Heart left ventricle (tissue), 16 donors: ENCODE measurements at regions of chr17 and their contacts with region 1.

Region 1: DNA sequence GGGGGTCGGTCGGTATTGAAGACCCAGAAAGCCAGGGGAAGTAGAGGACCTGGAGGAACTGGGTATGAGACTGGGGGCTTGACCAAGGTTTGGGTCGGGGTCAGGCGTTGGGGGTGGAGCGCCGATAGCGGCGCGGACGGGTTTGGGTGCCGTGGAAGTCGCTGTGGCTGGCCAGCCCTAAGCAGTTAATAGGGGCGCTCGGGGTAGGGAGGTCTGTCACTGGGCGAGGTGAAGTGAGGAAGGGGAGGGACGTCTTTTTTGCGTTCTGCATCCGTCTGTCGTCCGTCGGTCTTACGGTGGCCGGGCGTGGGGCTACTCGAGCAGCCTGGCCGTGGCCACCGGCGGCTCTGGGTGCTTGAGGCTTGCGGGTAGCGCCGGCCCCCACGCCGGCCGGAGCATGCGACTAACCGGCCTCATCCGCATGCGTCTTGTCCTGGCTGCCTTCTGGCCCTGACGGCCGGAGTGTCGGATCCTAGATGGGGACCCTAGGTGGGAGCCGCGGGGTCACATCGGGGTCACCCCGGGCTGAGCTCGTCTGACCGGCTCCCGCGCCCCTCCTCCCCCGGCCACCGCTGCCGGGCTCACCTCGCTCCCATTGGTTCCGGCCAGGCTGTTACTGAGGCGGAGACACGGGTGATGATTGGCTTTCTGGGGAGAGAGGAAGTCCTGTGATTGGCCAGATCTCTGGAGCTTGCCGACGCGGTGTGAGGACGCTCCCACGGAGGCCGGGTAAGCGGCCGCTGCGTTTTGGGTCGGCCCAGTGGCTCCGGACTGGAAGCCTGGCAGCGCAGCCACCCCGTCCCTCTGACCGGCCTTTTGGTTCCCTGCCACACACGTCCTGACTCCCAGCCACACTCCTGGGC is 10.3 kb upstream of the TMEM88 start:
- DNase-seq: peak; percentile 93 to 95 (median 94)
- ATAC-seq: peak; percentile 64 to 84 (median 73)
- H3K4me3 ChIP-seq: peak overlapping the region; percentile 48 to 90 (median 80)
- H3K27ac ChIP-seq: peak overlapping the region; percentile 66 to 99 (median 95)
- H3K4me1 ChIP-seq: peaks cover 11 to 51% (median 35%) of the 10 kb centered on the region in 12 donors
- H3K27me3 ChIP-seq: no peaks in the 10 kb centered on the region
- CTCF ChIP-seq: no peak
- POLR2A ChIP-seq: peak; percentile 64 to 70

Region 2: GRCh38 chr17:7239091-7240027 is 605.2 kb before region 1 on chr17 and contains the start of gene PHF23:
- intact Hi-C with region 1: loop called in 2 of 10 experiments (anchors 10 kb)
- DNase-seq: peak; percentile 99 to 100 (median 99)
- ATAC-seq: peak; percentile 79 to 86 (median 84)
- H3K4me3 ChIP-seq: peak within 1 kb of the TSS; percentile 66 to 98 (median 90)
- H3K27ac ChIP-seq: peak within 1 kb of the TSS; percentile 81 to 98 (median 94)
- H3K4me1 ChIP-seq: peaks cover 5 to 58% (median 40%) of the 10 kb centered on the region in 12 donors
- H3K27me3 ChIP-seq: no peaks in the 10 kb centered on the region
- CTCF ChIP-seq: peak in 1 of 12 donors; percentile 9
- POLR2A ChIP-seq: peak in 1 of 2 donors; percentile 56
- total RNA-seq, gene PHF23: 19.1 to 36.7 (median 23.0) TPM

Region 3: GRCh38 chr17:7444682-7445618 is 399.6 kb before region 1 on chr17 and contains the start of gene CHRNB1:
- intact Hi-C with region 1: loop called in 1 of 10 experiments (anchors 10 kb)
- DNase-seq: peak; percentile 82 to 90 (median 86)
- ATAC-seq: peak; percentile 80 to 92 (median 90)
- H3K4me3 ChIP-seq: peak within 1 kb of the TSS; percentile 40 to 64 (median 54)
- H3K27ac ChIP-seq: peak within 1 kb of the TSS in 10 of 12 donors; percentile 27 to 77 (median 65)
- H3K4me1 ChIP-seq: peaks cover 0 to 35% (median 17%) of the 10 kb centered on the region in 12 donors
- H3K27me3 ChIP-seq: peaks cover 0 to 48% (median 6%) of the 10 kb centered on the region in 9 donors
- CTCF ChIP-seq: peak in 3 of 12 donors; percentile 13 to 18 (median 16)
- POLR2A ChIP-seq: no peak
- total RNA-seq, gene CHRNB1: 8.2 to 14.2 (median 11.0) TPM

Region 4: GRCh38 chr17:8138672-8139371 is 294.3 kb after region 1 on chr17:
- intact Hi-C with region 1: loop called in 2 of 10 experiments (anchors 5 to 10 kb)
- DNase-seq: peak; percentile 94 to 97 (median 94)
- ATAC-seq: peak; percentile 90 to 93 (median 91)
- H3K4me3 ChIP-seq: peak overlapping the region in 8 of 12 donors; percentile 2 to 48 (median 33)
- H3K27ac ChIP-seq: peak overlapping the region; percentile 31 to 89 (median 81)
- H3K4me1 ChIP-seq: peaks cover 0 to 45% (median 15%) of the 10 kb centered on the region in 12 donors
- H3K27me3 ChIP-seq: no peaks in the 10 kb centered on the region
- CTCF ChIP-seq: peak; percentile 82 to 95 (median 90)
- POLR2A ChIP-seq: peak in 1 of 2 donors; percentile 75

Region 5: DNA sequence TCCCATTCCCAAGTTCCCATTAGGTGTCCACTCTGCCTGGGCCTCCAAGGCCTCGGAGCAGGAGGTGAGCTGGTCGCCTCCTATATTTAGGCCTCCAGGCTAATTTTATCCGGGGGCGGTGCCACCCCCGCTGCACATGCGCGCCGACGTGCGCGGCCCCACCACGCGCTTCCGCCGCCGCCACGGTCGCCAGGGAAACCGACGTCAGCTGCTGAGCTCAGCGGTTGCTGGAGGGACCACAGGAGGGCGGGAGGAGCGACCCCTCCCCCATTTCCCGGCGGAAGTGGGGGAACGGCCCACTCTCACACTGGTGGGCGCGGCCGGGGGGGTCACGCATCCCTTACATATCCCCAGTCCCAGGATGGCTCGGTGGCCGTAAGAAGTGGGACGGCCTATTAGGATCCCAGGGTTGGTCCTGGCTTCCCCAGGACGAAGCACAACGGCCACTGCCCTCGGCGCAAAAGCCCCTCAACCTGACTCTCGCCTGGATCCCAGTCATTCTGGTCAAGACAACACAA is 306.7 kb after region 1 on chr17:
- intact Hi-C with region 1: loop called in 3 of 10 experiments (anchors 5 to 10 kb)
- DNase-seq: peak; percentile 94 to 97 (median 96)
- ATAC-seq: peak; percentile 16 to 53 (median 44)
- H3K4me3 ChIP-seq: peak overlapping the region; percentile 51 to 97 (median 82)
- H3K27ac ChIP-seq: peak overlapping the region; percentile 98 to 100 (median 100)
- H3K4me1 ChIP-seq: peaks cover 21 to 65% (median 47%) of the 10 kb centered on the region in 12 donors
- H3K27me3 ChIP-seq: no peaks in the 10 kb centered on the region
- CTCF ChIP-seq: no peak
- POLR2A ChIP-seq: peak; percentile 65 to 67

Region 6: DNA sequence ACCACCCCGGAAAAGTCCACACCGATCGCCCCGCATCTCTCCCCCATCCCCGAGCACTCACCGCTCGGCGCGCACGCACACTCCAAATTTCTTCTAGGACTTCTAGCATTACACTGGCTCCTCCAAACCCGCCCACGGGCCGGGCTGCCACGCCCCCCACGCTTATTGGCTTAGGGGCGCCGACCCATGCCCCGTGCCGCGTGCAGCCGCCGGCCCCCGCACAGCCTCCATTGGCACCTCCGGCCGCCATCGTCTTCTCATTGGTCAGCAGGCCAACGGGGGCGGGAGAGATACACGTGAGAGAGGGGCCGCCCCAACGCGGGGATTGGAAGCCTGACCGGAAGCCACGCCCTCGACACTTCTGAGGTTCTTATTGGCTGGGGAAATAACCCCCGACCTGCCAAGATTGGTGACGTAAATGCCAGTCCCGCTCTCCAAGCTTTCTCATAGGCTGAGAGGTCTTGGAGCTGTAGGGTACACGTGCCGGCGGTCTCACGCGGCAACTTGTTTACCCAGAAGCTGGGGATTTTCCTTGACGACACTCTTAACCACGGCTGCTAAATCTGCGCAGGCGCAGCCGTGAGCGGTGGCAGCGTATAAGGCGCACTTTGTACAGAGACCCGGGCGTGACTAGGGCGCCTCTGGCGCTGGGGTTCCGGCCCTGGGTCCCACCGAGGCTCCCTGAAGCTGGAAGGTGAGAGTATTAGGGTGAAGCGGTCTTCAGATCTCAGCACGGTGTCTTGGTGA is 311.9 kb after region 1 on chr17:
- intact Hi-C with region 1: loop called in 2 of 10 experiments (anchors 5 to 10 kb)
- DNase-seq: peak; percentile 100
- ATAC-seq: peak; percentile 59 to 77 (median 61)
- H3K4me3 ChIP-seq: peak overlapping the region; percentile 69 to 97 (median 86)
- H3K27ac ChIP-seq: peak overlapping the region; percentile 98 to 100 (median 100)
- H3K4me1 ChIP-seq: peaks cover 20 to 79% (median 36%) of the 10 kb centered on the region in 12 donors
- H3K27me3 ChIP-seq: no peaks in the 10 kb centered on the region
- CTCF ChIP-seq: peak in 3 of 12 donors; percentile 16 to 36 (median 28)
- POLR2A ChIP-seq: peak; percentile 97 to 100